Activated CD8-positive, alpha-beta memory T cell treated with anti-CD3 and anti-CD28 coated beads, Interleukin-2, amount 10 ng/mL, durations not matched to agents 7 days and 5 days (primary cell): ENCODE measurements at regions of chr14 and their contacts with region 1.

Region 1: GRCh38 chr14:105999361-106000028 is 473.1 kb downstream of the TMEM121 start:
- DNase-seq: peak; percentile 93
- ATAC-seq: peak; percentile 88
- H3K4me3 Mint-ChIP-seq: peak overlapping the region; percentile 63
- H3K27ac Mint-ChIP-seq: peak overlapping the region; percentile 70
- H3K4me1 Mint-ChIP-seq: peaks cover 52% of the 10 kb centered on the region
- H3K27me3 Mint-ChIP-seq: no peaks in the 10 kb centered on the region

Region 2: DNA sequence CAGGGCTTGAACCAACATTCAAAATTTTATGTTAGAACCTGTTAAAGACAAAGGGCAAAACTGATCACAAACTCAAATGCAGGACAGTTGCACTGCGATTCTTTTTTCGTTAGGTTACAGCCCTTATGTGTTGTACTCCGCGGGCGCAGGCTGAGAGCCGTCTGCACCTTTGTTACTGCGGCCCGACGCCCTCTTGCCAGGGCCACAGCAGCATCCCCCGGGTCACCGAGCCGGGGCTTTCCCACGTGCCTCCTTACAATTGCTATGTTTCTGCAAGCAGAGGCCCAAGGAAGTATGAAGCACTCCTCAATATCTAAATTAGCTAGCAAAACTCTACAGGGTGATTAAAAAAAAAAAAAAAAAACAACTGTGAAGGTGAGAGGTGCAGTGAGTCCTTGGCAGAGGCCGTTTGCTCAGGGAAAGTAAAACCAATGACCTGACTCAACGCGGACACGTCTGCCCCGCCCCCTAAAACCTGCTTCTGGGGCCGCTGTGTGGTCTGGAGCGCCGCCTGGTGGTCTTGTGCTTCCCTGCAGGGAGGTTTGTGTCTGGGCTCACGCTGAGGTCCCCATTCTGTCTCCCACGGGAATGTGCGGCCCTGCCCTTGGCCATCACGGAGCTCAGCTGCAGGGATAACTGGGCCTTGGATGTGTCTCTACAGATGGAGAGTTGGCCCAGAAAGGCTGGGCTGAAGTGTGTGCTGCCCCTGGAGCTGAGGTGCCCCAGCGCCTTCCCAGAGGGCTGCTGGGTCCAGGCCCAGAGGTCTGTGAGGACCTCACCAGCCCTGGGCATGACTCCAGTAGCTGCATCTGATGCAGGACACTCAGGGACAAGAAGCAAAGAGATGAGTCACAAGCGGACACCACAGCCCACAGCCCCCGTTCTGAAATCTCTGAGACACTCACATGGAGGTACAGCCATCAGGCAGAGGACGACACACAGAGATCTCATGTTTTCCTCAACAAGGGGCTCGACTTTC is 54.6 kb before region 1 on chr14:
- CTCF ChIA-PET with region 1: interaction called, 10 read pairs
- DNase-seq: peak; percentile 84
- ATAC-seq: peak; percentile 81
- H3K4me3 Mint-ChIP-seq: no peak overlapping the region
- H3K27ac Mint-ChIP-seq: no peak overlapping the region
- H3K4me1 Mint-ChIP-seq: peaks cover 17% of the 10 kb centered on the region
- H3K27me3 Mint-ChIP-seq: peaks cover 13% of the 10 kb centered on the region

Region 3: DNA sequence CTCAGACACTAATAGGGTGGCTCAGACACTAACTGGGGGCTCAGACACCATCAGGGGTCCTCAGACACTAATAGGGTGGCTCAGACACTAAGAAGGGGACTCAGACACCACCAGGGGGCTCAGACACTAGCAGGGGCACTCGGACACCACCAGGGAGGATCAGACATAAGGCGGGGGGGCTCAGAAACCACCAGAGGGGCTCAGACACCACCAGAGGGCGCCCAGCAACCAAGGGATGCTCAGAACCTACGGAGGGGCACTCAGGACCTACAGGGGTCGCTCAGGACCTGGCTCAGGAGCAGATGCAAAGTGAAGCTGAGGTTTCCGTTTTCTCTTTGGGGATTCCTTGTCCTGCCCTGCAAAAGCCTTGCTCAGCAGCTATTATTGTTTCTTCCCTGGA is 24.6 kb before region 1 on chr14:
- CTCF ChIA-PET with region 1: interaction called, 39 read pairs
- DNase-seq: peak; percentile 81
- ATAC-seq: peak; percentile 95
- H3K4me3 Mint-ChIP-seq: no peak overlapping the region
- H3K27ac Mint-ChIP-seq: no peak overlapping the region
- H3K4me1 Mint-ChIP-seq: no peaks in the 10 kb centered on the region
- H3K27me3 Mint-ChIP-seq: peaks cover 13% of the 10 kb centered on the region

Region 4: DNA sequence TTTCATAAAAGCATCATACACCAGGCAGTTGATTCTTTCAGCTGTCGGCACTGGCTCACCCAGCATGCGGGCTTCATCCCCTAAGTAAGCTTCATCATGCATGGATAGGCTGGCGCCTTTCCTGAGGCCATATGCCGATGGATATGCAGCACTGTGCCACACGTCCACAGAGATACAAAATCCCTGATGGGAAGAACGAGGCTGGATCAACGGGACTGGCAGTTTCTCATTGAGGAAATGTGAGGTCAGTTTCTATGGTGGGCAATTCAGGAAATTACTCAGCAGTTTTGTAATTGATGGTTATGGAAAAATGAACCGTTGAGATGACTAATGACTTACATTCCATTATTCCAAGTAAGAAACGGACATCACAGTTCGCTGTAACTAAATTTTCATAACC is 19.3 kb before region 1 on chr14:
- CTCF ChIA-PET with region 1: interaction called, 39 read pairs
- DNase-seq: no peak
- ATAC-seq: no peak
- H3K4me3 Mint-ChIP-seq: no peak overlapping the region
- H3K27ac Mint-ChIP-seq: no peak overlapping the region
- H3K4me1 Mint-ChIP-seq: peaks cover 31% of the 10 kb centered on the region
- H3K27me3 Mint-ChIP-seq: peaks cover 2% of the 10 kb centered on the region

Region 5: DNA sequence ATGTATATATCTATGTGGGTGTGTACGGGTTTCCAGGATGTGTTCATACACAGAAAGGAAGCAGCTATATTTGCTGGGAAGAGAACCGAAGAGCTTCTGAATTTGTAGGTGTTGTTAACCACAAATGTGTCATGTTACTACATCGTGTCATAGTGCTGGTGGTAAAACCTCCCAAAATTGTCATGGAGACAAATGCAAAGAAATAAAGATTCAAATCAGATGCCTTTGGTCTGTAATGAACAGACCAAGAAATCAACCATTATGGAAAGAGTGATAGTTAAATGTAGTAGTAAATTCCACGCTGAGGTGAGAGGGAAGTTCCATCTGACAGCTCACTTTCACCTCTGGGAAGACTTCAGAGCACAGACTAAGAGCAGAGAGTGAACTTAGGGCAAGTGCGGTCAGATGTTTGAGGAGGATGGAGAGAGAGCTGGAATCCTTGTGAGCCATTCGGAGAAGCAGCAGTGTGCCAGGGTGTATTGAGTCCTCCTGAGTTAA is 14.4 kb after region 1 on chr14:
- CTCF ChIA-PET with region 1: interaction called, 23 read pairs
- DNase-seq: no peak
- ATAC-seq: peak; percentile 72
- H3K4me3 Mint-ChIP-seq: no peak overlapping the region
- H3K27ac Mint-ChIP-seq: peak overlapping the region; percentile 22
- H3K4me1 Mint-ChIP-seq: peaks cover 33% of the 10 kb centered on the region
- H3K27me3 Mint-ChIP-seq: peaks cover 22% of the 10 kb centered on the region